T-cell (primary cell): ENCODE measurements at regions of chr1 and their contacts with region 1.

Region 1: DNA sequence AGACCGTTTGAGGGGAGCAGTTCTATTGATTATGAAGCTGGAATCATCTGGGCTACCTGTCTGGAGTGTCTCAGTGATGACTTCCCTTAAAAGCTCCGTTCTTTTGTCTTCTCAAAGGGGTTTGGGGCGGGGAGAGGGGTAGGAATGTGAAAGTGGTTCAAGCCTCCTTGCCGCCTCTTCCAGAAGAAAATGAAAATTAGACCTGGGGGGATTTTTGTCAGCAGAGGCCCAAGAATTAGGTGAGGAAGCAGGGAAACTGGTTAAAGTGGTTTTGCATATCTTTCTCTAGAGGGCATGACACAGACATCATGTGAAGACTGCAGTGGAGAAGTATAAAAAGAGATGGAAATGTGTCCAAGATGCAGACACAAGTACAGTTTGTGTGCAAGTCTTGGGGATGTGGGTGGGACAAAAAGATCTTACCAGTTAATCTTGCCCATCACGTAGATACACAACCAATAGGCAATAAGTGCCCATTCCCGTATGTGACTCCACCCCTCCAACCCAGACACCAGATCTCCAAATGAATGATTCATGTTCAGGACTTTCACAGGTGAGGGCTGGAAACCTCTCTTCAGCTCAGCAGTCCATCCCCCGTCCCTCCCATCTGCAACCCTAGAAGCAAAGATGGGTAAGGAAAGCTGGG is 504 bp upstream of the MTMR11 start:
- DNase-seq: no peak
- ATAC-seq: no peak
- H3K4me3 ChIP-seq: no peak overlapping the region
- H3K4me3 Mint-ChIP-seq: no peak overlapping the region
- H3K27ac ChIP-seq: no peak overlapping the region
- H3K27ac Mint-ChIP-seq: peak overlapping the region in 1 of 2 donors; percentile 34
- H3K4me1 ChIP-seq: peaks cover 6 to 13% of the 10 kb centered on the region in 2 experiments
- H3K4me1 Mint-ChIP-seq: peaks cover 8 to 21% (median 19%) of the 10 kb centered on the region in 3 donors
- H3K27me3 ChIP-seq: peaks cover 0 to 3% of the 10 kb centered on the region in 2 experiments
- H3K27me3 Mint-ChIP-seq: peaks cover under 1 to 4% of the 10 kb centered on the region in 2 donors

Region 2: GRCh38 chr1:150352866-150353265 is 415.7 kb after region 1 on chr1:
- CTCF ChIA-PET with region 1: no interaction called
- POLR2A ChIA-PET with region 1: interaction called in 1 of 2 experiments, 11 read pairs
- DNase-seq: no peak
- ATAC-seq: no peak
- H3K4me3 ChIP-seq: no peak overlapping the region
- H3K4me3 Mint-ChIP-seq: no peak overlapping the region
- H3K27ac ChIP-seq: no peak overlapping the region
- H3K27ac Mint-ChIP-seq: no peak overlapping the region
- H3K4me1 ChIP-seq: no peaks in the 10 kb centered on the region
- H3K4me1 Mint-ChIP-seq: no peaks in the 10 kb centered on the region
- H3K27me3 ChIP-seq: no peaks in the 10 kb centered on the region
- H3K27me3 Mint-ChIP-seq: no peaks in the 10 kb centered on the region